ENCODE measurements at regions of chr10 and their contacts with region 1.

Region 1: GRCh38 chr10:97572214-97572989 is at the start of gene ANKRD2:
- DNase-seq: peak in 30 of 35 experiments; percentile 8 to 62 (median 38)
- ATAC-seq: peak in 3 of 4 experiments; percentile 54 to 64 (median 58)
- H3K4me3 ChIP-seq: no peak within 1 kb of the TSS
- H3K4me3 Mint-ChIP-seq: no peak within 1 kb of the TSS
- H3K27ac ChIP-seq: no peak within 1 kb of the TSS
- H3K27ac Mint-ChIP-seq: no peak within 1 kb of the TSS
- H3K4me1 ChIP-seq: no peaks in the 10 kb centered on the region
- H3K4me1 Mint-ChIP-seq: no peaks in the 10 kb centered on the region
- H3K27me3 ChIP-seq: peaks cover 0 to 10% of the 10 kb centered on the region in 2 experiments
- H3K27me3 Mint-ChIP-seq: peaks cover 0 to 2% of the 10 kb centered on the region in 2 donors
- total RNA-seq, gene ANKRD2: 0.35 TPM in 1 of 5 donors, not detected in the others

Region 2: DNA sequence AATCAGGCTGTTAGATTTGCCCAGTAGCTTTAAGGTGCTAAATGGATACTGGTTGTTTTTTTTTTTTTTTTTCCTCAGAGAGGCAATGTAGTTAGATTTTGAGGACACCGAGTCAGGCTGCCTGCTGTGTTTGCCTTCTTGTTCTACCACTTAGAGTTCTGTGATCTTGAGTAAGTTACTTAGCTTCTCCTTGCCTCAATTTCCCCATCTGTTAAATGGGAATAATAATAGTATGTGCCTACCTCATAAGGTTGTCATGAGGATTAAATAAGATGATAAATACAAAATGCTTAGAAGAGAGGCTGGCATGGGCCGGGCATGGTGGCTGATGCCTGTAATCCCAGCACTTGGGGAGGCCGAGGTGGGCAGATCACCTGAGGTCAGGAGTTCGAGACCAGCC is 46.3 kb after region 1 on chr10:
- CTCF ChIA-PET with region 1: interaction called in 1 of 2 experiments, 12 read pairs
- POLR2A ChIA-PET with region 1: no interaction called
- DNase-seq: no peak
- ATAC-seq: no peak
- H3K4me3 ChIP-seq: no peak overlapping the region
- H3K4me3 Mint-ChIP-seq: no peak overlapping the region
- H3K27ac ChIP-seq: no peak overlapping the region
- H3K27ac Mint-ChIP-seq: no peak overlapping the region
- H3K4me1 ChIP-seq: no peaks in the 10 kb centered on the region
- H3K4me1 Mint-ChIP-seq: no peaks in the 10 kb centered on the region
- H3K27me3 ChIP-seq: no peaks in the 10 kb centered on the region
- H3K27me3 Mint-ChIP-seq: no peaks in the 10 kb centered on the region

Region 3: DNA sequence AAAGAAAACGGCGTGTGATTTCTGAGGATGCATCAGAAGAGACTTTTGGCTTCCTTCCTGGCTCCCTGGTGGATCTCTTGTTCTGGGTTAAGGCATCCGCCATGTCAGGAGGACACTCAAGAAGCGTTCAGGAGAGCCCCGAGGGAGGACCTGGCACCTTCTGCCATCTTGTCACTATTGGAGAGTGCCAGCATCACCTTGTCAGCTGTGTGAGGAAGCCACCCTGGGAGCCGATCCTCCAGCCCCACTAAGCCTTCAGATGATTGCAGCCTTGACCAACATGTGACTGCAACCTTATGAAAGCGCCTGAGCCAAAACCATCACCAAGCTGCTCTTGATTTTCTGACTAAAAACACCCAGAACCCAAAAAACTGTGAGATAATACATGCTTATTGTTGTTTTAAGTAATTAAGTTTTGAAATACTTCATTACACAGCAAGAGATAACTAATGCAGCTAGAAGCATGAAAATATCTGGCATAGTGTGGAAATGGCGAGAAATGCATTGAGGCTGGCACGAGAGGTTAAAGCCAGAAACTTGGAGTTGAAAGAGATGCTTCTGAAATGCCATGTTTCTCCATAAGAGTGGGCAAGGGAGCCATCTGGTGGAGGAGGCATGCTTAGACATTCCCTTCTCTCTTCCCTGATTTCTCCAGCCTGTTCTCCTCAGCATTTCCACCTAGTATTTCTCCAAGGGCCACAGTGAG is 159.1 kb after region 1 on chr10:
- CTCF ChIA-PET with region 1: interaction called in 1 of 2 experiments, 12 read pairs
- POLR2A ChIA-PET with region 1: no interaction called
- DNase-seq: peak in 27 of 35 experiments; percentile 13 to 81 (median 44)
- ATAC-seq: peak; percentile 53 to 69 (median 60)
- H3K4me3 ChIP-seq: no peak overlapping the region
- H3K4me3 Mint-ChIP-seq: no peak overlapping the region
- H3K27ac ChIP-seq: no peak overlapping the region
- H3K27ac Mint-ChIP-seq: no peak overlapping the region
- H3K4me1 ChIP-seq: peaks cover 0 to 5% of the 10 kb centered on the region in 2 experiments
- H3K4me1 Mint-ChIP-seq: peaks cover 6 to 11% (median 11%) of the 10 kb centered on the region in 3 donors
- H3K27me3 ChIP-seq: peaks cover 0 to 15% of the 10 kb centered on the region in 2 experiments
- H3K27me3 Mint-ChIP-seq: peaks cover 0 to 13% of the 10 kb centered on the region in 2 donors